Ovary (tissue), 10 donors: ENCODE measurements at regions of chr10 and their contacts with region 1.

Region 1: DNA sequence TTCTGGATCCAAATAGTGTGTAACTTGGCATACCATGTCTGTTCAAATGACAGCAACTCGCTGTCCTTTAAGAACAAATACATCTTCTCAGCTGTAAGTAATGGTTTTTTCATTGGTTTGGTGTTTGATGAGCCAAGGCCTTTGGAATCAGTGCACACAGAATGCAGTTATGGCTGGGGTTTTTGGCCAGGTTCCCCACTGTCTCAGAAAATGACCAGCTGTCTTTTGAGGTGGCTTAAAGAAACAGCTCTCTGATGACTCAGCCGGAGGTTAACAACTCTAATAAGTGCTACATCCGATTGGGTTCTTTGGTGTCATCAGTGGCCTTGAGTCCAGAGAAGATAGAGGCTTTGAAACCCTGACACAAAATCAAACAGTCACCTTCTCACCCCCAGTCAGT is 688.4 kb downstream of the REEP3 start:
- DNase-seq: peak in 1 of 5 donors; percentile 9
- H3K4me3 ChIP-seq: no peak overlapping the region
- H3K27ac ChIP-seq: no peak overlapping the region
- H3K4me1 ChIP-seq: no peaks in the 10 kb centered on the region
- H3K27me3 ChIP-seq: no peaks in the 10 kb centered on the region
- CTCF ChIP-seq: no peak
- EP300 ChIP-seq: no peak
- POLR2A ChIP-seq: no peak

Region 2: DNA sequence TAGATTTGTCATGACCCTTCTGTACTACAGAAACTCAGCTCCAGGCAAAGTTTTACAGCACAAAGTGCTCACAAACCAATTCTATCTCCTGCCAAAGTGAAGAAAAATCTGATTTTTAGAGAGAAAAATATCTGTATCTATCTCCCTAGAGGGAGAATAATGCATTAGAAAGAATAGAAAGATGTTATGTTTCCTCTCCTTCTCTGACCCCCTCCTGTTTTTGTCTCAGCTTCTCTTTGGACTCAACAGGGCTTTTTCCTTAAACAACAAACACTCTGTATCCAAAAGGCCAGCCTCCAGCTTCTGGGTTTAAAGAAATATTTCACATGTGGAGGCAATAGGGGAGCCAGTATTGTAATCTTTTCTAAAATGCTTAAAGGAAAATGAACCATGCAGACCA is 61.0 kb before region 1 on chr10:
- intact Hi-C with region 1: no loop called
- DNase-seq: no peak
- H3K4me3 ChIP-seq: no peak overlapping the region
- H3K27ac ChIP-seq: no peak overlapping the region
- H3K4me1 ChIP-seq: no peaks in the 10 kb centered on the region
- H3K27me3 ChIP-seq: no peaks in the 10 kb centered on the region
- CTCF ChIP-seq: no peak
- EP300 ChIP-seq: no peak
- POLR2A ChIP-seq: no peak

Region 3: GRCh38 chr10:64261092-64261491 is 51.5 kb after region 1 on chr10:
- intact Hi-C with region 1: loop called in 1 of 4 experiments (anchors 10 kb)
- DNase-seq: no peak
- H3K4me3 ChIP-seq: no peak overlapping the region
- H3K27ac ChIP-seq: no peak overlapping the region
- H3K4me1 ChIP-seq: no peaks in the 10 kb centered on the region
- H3K27me3 ChIP-seq: no peaks in the 10 kb centered on the region
- CTCF ChIP-seq: no peak
- EP300 ChIP-seq: no peak
- POLR2A ChIP-seq: no peak